ENCODE measurements at regions of chr12 and their contacts with region 1.

Region 1: GRCh38 chr12:100266835-100267618 is at the starts of genes DEPDC4 and SCYL2:
- DNase-seq: peak; percentile 97
- ATAC-seq: peak; percentile 95
- H3K4me3 Mint-ChIP-seq: peak within 1 kb of the TSS; percentile 82
- H3K27ac Mint-ChIP-seq: peak within 1 kb of the TSS; percentile 95
- H3K4me1 Mint-ChIP-seq: peaks cover 23% of the 10 kb centered on the region
- H3K27me3 Mint-ChIP-seq: no peaks in the 10 kb centered on the region
- total RNA-seq, gene DEPDC4: 2.9 to 4.2 TPM
- total RNA-seq, gene SCYL2: 25.9 to 29.3 TPM

Region 2: GRCh38 chr12:98490501-98491453 is 1776.2 kb before region 1 on chr12:
- CTCF ChIA-PET with region 1: no interaction called
- POLR2A ChIA-PET with region 1: no interaction called
- intact Hi-C with region 1: no loop called
- DNase-seq: peak; percentile 88
- ATAC-seq: peak; percentile 85
- H3K4me3 Mint-ChIP-seq: peak overlapping the region; percentile 22
- H3K27ac Mint-ChIP-seq: peak overlapping the region; percentile 81
- H3K4me1 Mint-ChIP-seq: peaks cover 5% of the 10 kb centered on the region
- H3K27me3 Mint-ChIP-seq: no peaks in the 10 kb centered on the region

Region 3: GRCh38 chr12:98644711-98645402 is 1622.2 kb before region 1 on chr12 and contains the starts of genes APAF1 and IKBIP:
- CTCF ChIA-PET with region 1: no interaction called
- POLR2A ChIA-PET with region 1: no interaction called
- intact Hi-C with region 1: loop called in 1 of 2 experiments (anchors 2 kb)
- DNase-seq: peak; percentile 98
- ATAC-seq: peak; percentile 92
- H3K4me3 Mint-ChIP-seq: peak within 1 kb of the TSS; percentile 91
- H3K27ac Mint-ChIP-seq: peak within 1 kb of the TSS; percentile 94
- H3K4me1 Mint-ChIP-seq: peaks cover 16% of the 10 kb centered on the region
- H3K27me3 Mint-ChIP-seq: no peaks in the 10 kb centered on the region
- total RNA-seq, gene APAF1: 16.5 to 17.4 TPM
- total RNA-seq, gene IKBIP: 20.1 to 27.0 TPM

Region 4: GRCh38 chr12:100200463-100201181 is 66.4 kb before region 1 on chr12 and contains the start of gene ACTR6:
- CTCF ChIA-PET with region 1: interaction called, 4 read pairs
- POLR2A ChIA-PET with region 1: interaction called, 6 read pairs
- intact Hi-C with region 1: loop called (anchors 1 kb)
- DNase-seq: peak; percentile 98
- ATAC-seq: peak; percentile 84
- H3K4me3 Mint-ChIP-seq: peak within 1 kb of the TSS; percentile 93
- H3K27ac Mint-ChIP-seq: peak within 1 kb of the TSS; percentile 100
- H3K4me1 Mint-ChIP-seq: peaks cover 26% of the 10 kb centered on the region
- H3K27me3 Mint-ChIP-seq: no peaks in the 10 kb centered on the region
- total RNA-seq, gene ACTR6: 21.6 to 37.3 TPM

Region 5: DNA sequence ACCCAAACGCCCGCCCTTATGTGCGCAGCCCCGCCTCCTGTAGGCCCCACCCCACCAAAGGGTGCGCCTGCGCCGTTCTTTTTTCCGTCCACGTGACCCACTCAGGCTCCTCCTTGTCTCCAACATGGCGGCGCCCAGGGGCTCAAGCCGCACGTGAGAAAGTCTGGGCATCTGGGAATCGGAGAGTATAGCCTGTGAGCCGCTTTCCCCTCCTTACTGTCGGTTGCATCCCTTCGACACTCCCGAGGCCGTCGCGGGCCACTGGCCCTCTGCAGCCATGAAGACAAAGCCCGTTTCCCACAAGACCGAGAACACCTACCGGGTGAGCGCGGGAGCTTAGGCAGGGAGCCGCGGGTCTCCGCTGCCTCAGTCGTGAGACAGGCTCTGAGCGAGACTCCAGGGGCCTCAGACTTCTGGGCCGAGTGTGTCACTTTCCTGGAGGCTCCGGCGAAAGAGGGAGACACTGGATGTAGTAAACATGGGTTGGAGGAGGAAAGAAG is 1013.0 kb after region 1 on chr12 and contains the start of gene UTP20:
- CTCF ChIA-PET with region 1: interaction called, 4 read pairs
- POLR2A ChIA-PET with region 1: no interaction called
- intact Hi-C with region 1: loop called (anchors 2 kb)
- DNase-seq: peak; percentile 97
- ATAC-seq: peak; percentile 100
- H3K4me3 Mint-ChIP-seq: peak within 1 kb of the TSS; percentile 93
- H3K27ac Mint-ChIP-seq: peak within 1 kb of the TSS; percentile 85
- H3K4me1 Mint-ChIP-seq: peaks cover 17% of the 10 kb centered on the region
- H3K27me3 Mint-ChIP-seq: peaks cover 9% of the 10 kb centered on the region
- total RNA-seq, gene UTP20: 29.4 to 33.1 TPM

Region 6: GRCh38 chr12:102119674-102120563 is 1852.9 kb after region 1 on chr12 and contains the starts of genes NUP37 and PARPBP:
- CTCF ChIA-PET with region 1: no interaction called
- POLR2A ChIA-PET with region 1: no interaction called
- intact Hi-C with region 1: loop called in 1 of 2 experiments (anchors 10 kb)
- DNase-seq: peak; percentile 96
- ATAC-seq: peak; percentile 93
- H3K4me3 Mint-ChIP-seq: peak within 1 kb of the TSS; percentile 95
- H3K27ac Mint-ChIP-seq: peak within 1 kb of the TSS; percentile 95
- H3K4me1 Mint-ChIP-seq: peaks cover 19% of the 10 kb centered on the region
- H3K27me3 Mint-ChIP-seq: no peaks in the 10 kb centered on the region
- total RNA-seq, gene NUP37: 100 to 108 TPM
- total RNA-seq, gene PARPBP: 21.7 to 26.4 TPM

Measured in activated CD4-positive, alpha-beta T cell treated with anti-CD3 and anti-CD28 coated beads for 36 hours (primary cell).